ENCODE measurements at regions of chr4 and their contacts with region 1.

Region 1: GRCh38 chr4:176319704-176320339 is at the start of gene SPCS3:
- DNase-seq: peak; percentile 94 to 98 (median 96)
- ATAC-seq: peak; percentile 95
- H3K4me3 ChIP-seq: peak within 1 kb of the TSS; percentile 83
- H3K27ac ChIP-seq: peak within 1 kb of the TSS; percentile 84 to 100 (median 97)
- H3K4me1 ChIP-seq: peaks cover 11% of the 10 kb centered on the region
- H3K27me3 ChIP-seq: no peaks in the 10 kb centered on the region
- CTCF ChIP-seq: no peak
- POLR2A ChIP-seq: peak; percentile 82 to 88 (median 88)
- total RNA-seq, gene SPCS3: 79.1 to 87.2 TPM

Region 2: DNA sequence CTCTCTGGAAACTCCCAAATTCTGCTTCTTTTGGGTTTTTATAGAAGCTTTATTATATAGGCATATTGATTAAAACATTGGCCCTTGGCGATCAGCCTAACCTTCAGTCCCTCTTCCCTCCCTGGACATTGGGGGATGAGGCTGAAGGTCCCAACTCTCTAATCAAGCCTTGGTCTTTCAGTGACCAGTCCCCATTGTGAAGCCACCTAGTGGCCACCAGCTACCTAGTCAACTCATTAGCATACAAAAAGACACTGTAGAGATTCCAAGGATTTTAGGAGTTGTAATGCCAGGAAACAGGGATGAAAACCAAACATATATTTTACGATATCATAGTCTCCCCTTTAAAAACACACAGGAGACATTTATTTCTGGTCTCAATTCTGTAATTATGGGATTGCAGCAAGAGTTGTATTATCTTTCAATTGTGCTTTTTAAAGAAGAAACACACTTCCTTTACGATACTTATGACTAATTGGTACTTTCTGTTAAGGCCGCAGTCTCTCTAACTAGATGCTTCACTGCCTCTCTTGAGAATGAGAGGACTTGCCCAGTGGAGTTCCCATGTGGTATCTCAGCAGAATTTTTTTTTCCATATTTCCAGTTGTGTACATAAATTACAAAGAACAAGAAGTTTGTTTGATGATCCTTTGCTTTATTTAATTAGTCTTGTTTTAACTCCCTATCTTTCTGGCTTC is 196.0 kb before region 1 on chr4:
- intact Hi-C with region 1: no loop called
- DNase-seq: peak; percentile 36 to 51 (median 48)
- ATAC-seq: peak; percentile 62
- H3K4me3 ChIP-seq: no peak overlapping the region
- H3K27ac ChIP-seq: no peak overlapping the region
- H3K4me1 ChIP-seq: no peaks in the 10 kb centered on the region
- H3K27me3 ChIP-seq: no peaks in the 10 kb centered on the region
- CTCF ChIP-seq: peak; percentile 28 to 55 (median 48)
- POLR2A ChIP-seq: no peak

Region 3: DNA sequence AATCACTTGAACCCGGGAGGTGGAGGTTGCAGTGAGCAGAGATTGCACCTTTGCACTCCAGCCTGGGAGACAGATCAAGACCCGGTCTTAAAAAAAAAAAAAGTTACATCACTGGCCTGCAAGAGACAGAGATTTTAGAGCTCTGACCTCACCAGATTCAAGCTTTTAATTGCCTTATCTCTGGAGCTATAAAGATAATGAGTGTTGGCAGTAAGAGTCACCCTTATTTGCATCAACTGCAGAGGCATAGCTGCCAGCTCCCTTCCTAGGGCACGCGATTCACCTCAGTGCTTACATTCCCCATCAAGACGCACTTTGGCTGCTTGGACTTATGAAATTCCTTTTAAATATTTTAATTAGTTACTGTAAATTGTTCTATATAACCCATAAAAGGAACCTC is 112.0 kb before region 1 on chr4:
- intact Hi-C with region 1: loop called (anchors 10 kb)
- DNase-seq: no peak
- ATAC-seq: no peak
- H3K4me3 ChIP-seq: no peak overlapping the region
- H3K27ac ChIP-seq: no peak overlapping the region
- H3K4me1 ChIP-seq: no peaks in the 10 kb centered on the region
- H3K27me3 ChIP-seq: no peaks in the 10 kb centered on the region
- CTCF ChIP-seq: no peak
- POLR2A ChIP-seq: no peak